Posterior cingulate gyrus (tissue), 11 donors: ENCODE measurements at regions of chr3 and their contacts with region 1.

Region 1: DNA sequence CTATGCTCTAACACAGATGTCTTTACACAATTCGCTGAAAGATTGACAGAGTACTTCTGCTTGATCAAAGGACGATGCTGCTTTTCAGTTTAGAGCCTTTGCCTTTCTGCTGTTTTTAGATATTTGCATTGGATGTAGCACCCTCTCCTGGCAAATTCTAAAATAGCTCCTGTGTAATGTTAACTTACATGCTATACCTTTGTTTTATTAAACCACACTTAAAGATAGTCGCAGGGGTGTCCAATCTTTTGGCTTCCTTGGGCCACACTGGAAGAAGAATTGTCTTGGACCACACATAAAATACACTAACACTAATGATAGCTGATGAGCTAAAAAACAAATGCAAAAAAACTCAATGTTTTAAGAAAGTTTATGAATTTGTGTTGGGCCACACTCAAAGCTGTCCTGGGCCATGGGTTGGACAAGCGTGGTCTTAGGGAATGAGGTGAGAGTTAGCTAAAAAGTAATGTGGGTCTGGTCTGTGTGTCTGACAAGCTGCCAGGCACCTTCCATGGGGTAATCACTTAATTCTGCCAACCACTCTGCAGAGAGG is 62.9 kb downstream of the ATG7 start:
- DNase-seq: no peak

Region 2: GRCh38 chr3:10459954-10460754 is 875.0 kb before region 1 on chr3:
- intact Hi-C with region 1: no loop called
- DNase-seq: peak in 2 of 10 donors; percentile 35 to 68

Region 3: GRCh38 chr3:11154036-11154952 is 180.8 kb before region 1 on chr3 and contains the start of gene HRH1:
- intact Hi-C with region 1: loop called (anchors 5 kb)
- DNase-seq: peak in 4 of 10 donors; percentile 28 to 86 (median 78)

Region 4: DNA sequence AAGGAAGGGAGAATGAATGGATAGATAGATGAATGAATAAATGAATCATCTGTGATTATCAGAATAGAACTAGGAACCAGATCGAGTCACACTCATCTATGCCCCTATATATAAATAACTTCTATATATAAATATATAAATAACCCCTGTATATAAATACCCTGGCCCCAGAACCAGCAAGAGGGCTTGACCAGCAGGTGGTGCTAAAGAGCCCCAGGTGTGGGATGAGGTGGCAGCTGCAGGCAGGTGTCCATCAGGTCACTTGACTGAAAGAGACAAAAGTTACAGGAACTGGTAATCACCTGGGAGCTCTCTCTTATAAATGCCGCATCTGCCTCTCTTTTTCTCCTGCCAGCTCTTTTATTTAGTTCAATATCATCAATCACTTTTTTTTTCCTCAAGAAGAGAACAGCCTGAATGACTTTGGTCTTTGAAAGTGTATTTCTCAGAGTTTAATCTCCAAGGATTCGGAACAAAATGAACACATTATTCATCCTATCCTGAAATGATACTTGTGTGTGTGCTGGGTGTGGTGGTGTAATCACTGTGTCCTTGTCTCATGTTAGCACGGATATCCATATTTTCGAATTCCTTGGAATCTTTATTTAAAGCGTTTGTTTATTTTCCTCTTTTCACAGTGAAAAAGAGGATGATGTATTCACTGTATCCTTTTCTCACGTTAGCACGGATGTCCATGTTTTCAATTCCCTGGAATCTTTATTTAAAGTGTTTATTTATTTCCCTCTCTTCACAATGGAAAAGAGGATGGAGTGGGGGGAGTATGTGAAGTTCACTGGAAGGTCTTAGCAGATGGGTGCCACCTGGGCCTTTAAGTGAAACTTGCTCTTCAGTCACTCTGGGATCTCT is 98.3 kb before region 1 on chr3:
- intact Hi-C with region 1: loop called (anchors 2 kb)
- DNase-seq: peak in 5 of 10 donors; percentile 33 to 84 (median 56)

Region 5: DNA sequence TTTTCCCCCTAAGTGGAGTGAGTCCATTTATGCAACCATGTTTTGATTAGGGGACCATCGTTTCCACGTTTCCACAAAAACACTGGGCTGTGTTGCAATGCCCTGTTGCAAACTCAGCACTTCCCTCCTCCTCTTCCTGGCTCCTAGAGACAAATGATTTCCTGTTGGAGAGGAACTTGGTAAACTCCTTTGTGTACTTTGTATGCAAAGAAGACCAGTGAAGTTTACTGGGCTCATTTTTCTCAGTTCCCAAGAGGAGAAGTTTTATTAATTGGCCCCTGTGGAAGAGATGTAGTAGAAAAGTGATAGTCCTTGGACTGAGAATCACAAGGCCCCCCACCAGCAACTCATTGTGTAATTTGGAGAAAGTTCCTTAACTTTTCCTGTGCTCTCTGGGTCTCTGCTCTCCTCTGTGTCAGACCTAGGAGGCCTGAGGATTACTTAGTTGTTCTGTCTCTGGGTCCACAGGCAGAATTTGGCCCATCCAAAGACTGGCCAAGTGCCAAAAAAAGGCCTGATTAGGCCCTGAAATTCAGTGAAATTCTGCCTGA is 32.1 kb after region 1 on chr3:
- intact Hi-C with region 1: no loop called
- DNase-seq: peak in 1 of 10 donors; percentile 19

Region 6: GRCh38 chr3:11379233-11379823 is 44.2 kb after region 1 on chr3:
- intact Hi-C with region 1: no loop called
- DNase-seq: no peak

Region 7: DNA sequence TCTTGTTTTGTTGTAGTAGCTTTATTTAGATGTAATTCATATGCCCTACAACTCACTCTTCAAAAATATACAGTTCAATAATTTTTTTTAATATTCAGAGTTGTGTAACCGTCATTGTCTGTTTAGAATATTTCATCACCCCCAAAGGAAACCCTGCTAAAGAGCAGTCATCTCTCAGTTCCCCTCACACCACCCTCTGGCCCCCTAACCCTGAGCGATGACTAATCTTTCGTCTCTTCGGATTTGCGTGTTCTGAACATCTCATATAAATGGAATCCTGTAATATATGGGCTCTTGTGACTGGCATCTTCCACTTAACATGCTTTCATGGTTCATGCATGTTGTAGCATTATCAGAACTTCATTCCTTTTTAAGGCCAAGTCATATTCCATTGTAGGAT is 120.8 kb after region 1 on chr3:
- intact Hi-C with region 1: no loop called
- DNase-seq: no peak